H1 (cell line): ENCODE measurements at regions of chr11 and their contacts with region 1.

Region 1: GRCh38 chr11:116379185-116379828 is 393.5 kb downstream of the BUD13 start:
- DNase-seq: peak in 1 of 2 experiments; percentile 81
- H3K4me3 ChIP-seq: 0 out of 8 replicates have a peak overlapping the region, but pooled peaks of 1 of the 4 experiments have one; percentile 9
- H3K27ac ChIP-seq: no peak overlapping the region
- H3K4me1 ChIP-seq: peaks cover 0 to 7% (median 2%) of the 10 kb centered on the region in 4 experiments; a peak in 2 of 7 replicates
- H3K27me3 ChIP-seq: no peaks in the 10 kb centered on the region
- CTCF ChIP-seq: no peak
- EP300 ChIP-seq: no peak
- POLR2A ChIP-seq: no peak
- RAD21 ChIP-seq: no peak

Region 2: GRCh38 chr11:116366980-116367645 is 12.2 kb before region 1 on chr11:
- CTCF ChIA-PET with region 1: interaction called, 10 read pairs
- POLR2A ChIA-PET with region 1: no interaction called
- DNase-seq: peak in 1 of 2 experiments; percentile 51
- H3K4me3 ChIP-seq: no peak overlapping the region
- H3K27ac ChIP-seq: no peak overlapping the region
- H3K4me1 ChIP-seq: peaks cover 3 to 11% (median 8%) of the 10 kb centered on the region in 4 experiments; a peak in 6 of 7 replicates
- H3K27me3 ChIP-seq: no peaks in the 10 kb centered on the region
- CTCF ChIP-seq: no peak
- EP300 ChIP-seq: no peak
- POLR2A ChIP-seq: no peak
- RAD21 ChIP-seq: no peak